ENCODE measurements at regions of chr17 and their contacts with region 1.

Region 1: DNA sequence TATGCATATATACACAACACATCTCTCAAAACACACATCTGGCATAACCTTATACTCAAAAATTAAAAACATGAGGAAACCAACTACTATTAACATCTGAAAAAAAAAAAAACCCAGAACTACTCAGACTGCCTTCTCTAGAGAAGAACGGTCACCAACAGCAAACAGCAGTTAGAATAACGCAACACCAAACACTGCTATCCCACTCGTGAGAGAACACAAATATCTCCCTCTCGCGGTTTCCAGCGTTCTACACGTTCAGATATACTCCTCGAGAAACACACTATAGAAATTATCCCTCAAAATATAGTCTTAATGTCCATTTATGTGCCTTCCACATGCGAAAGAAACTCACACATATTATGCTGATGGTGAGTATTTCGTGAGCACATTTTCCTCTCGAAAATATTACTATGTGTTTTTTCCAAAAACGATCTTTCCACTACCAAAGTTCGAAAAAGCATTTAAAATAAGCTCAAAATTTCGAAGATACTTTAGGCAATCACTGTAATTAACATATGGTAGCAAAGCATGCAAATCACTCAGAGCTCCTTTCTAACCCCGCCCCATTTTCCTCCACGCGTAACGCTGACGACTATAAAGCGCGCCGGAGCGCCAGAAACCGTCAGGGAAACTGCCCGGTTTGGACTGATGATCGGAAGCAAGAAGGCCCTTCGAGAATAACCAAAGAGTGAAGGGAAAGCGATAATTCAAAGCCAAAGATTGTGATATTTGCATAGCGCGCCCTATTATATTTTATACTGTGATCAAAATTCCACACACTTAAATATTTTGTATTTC is 60.1 kb downstream of the TEX14 start:
- DNase-seq: peak; percentile 96
- H3K4me3 Mint-ChIP-seq: no peak overlapping the region
- H3K27ac Mint-ChIP-seq: no peak overlapping the region
- H3K4me1 Mint-ChIP-seq: peaks cover 4% of the 10 kb centered on the region
- H3K27me3 Mint-ChIP-seq: no peaks in the 10 kb centered on the region

Region 2: DNA sequence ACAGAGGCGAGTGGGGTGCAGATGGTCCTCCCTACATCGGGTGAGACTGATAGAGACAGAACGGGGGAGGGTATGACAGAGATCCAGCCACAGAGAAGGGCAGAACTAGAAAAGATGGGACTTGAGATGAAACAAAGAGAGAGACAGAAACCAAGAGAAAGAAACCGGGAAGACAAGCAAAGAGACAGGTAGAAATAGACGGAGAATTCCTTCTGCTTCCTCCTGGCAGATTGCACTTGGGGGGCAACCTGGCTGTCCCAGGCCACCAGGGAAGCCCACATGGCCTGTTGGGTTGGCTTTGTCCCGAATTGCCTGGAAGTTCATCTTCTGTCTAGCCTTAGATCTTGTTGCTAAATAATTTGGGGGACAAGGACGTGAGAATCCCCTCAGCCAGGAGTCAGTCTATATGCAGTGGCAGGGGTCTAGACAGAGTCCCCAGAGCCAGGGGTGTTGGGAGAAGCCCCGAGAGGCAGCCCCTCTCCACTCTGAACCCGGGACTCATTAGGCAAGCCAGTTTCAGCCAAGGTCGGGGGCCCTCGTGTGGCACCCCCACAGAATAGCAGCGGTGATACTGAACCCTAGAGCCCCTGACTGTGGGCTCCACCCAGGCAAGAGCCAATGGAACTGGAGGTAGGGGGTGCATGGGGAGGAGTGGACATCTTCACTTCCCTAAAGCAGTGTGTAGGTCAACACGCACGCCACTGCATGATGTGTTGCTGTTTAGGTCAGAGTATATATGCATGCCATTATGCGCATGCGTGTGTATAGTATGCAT is 302.5 kb before region 1 on chr17:
- intact Hi-C with region 1: loop called (anchors 5 kb)
- DNase-seq: peak; percentile 81
- H3K4me3 Mint-ChIP-seq: peak overlapping the region; percentile 100
- H3K27ac Mint-ChIP-seq: peak overlapping the region; percentile 93
- H3K4me1 Mint-ChIP-seq: peaks cover 45% of the 10 kb centered on the region
- H3K27me3 Mint-ChIP-seq: peaks cover 2% of the 10 kb centered on the region

Region 3: GRCh38 chr17:58658804-58659713 is 27.3 kb after region 1 on chr17:
- intact Hi-C with region 1: loop called (anchors 1 kb)
- DNase-seq: peak; percentile 74
- H3K4me3 Mint-ChIP-seq: peak overlapping the region; percentile 63
- H3K27ac Mint-ChIP-seq: peak overlapping the region; percentile 97
- H3K4me1 Mint-ChIP-seq: peaks cover 25% of the 10 kb centered on the region
- H3K27me3 Mint-ChIP-seq: peaks cover 7% of the 10 kb centered on the region

Region 4: GRCh38 chr17:58703137-58703972 is 71.6 kb after region 1 on chr17:
- intact Hi-C with region 1: loop called (anchors 2 kb)
- DNase-seq: no peak
- H3K4me3 Mint-ChIP-seq: no peak overlapping the region
- H3K27ac Mint-ChIP-seq: peak overlapping the region; percentile 89
- H3K4me1 Mint-ChIP-seq: peaks cover 48% of the 10 kb centered on the region
- H3K27me3 Mint-ChIP-seq: no peaks in the 10 kb centered on the region

Region 5: GRCh38 chr17:58728786-58729185 is 97.1 kb after region 1 on chr17:
- intact Hi-C with region 1: no loop called
- DNase-seq: no peak
- H3K4me3 Mint-ChIP-seq: no peak overlapping the region
- H3K27ac Mint-ChIP-seq: no peak overlapping the region
- H3K4me1 Mint-ChIP-seq: peaks cover 5% of the 10 kb centered on the region
- H3K27me3 Mint-ChIP-seq: no peaks in the 10 kb centered on the region

Region 6: DNA sequence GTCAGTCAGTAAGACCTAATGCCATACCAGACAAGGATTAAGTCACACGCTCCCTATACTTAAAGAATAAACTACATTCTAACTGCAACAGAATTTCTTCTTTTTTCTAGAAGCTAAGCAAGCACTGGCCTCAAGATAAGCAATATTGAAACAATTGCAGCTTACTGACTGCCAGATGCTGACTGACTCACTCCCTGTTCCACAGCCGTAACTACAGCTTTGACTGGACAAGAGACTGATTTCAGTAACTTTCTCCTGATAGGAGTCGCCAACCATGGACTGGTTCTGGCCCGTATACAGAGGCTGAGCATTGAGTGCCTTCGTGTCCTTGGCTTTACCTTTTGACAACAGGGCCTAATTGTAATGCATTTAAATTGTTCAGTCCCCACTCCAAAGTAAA is 407.0 kb after region 1 on chr17:
- intact Hi-C with region 1: no loop called
- DNase-seq: no peak
- H3K4me3 Mint-ChIP-seq: peak overlapping the region; percentile 15
- H3K27ac Mint-ChIP-seq: peak overlapping the region; percentile 29
- H3K4me1 Mint-ChIP-seq: peaks cover 6% of the 10 kb centered on the region
- H3K27me3 Mint-ChIP-seq: no peaks in the 10 kb centered on the region

Region 7: DNA sequence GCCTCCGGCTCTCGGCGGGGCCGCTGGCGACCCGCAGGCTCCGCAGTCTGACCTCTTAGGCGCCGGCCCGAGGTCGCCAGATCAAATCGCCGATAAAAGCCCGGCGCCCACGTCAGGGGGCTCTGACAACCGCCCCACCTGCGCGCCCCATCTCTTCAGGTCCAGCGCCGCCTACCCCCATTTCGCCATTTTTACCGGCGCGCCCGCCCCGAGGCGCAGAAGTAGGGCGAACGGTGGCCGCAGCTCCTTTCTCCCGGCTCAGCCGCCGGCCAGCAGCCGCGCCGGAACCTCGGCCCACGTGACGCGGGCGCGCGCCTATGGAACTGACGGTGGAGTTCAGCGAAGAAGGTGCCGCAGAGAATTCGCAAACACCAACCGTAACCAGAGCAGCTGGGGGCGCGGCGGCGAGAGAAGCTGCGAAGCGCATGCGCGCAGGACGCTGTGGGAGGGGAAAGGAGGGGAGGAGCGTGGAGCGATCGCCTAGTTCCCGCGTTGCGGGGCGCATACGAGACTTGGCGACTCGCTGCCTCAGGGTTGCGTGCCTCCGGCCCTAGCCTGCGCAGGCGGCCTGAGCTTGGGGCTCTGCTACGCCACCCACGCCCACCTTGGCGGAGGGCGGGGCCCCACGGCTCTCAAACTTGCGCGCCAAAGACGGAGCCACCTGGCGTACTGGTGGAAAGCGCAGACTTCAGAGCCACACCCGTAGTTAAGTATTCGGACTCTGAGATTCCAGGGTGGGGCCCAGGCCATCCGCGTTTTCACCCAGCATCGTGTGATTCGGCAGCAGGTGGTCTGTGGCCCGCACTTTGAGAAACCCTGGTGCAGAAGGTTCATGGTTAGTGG is 475.0 kb after region 1 on chr17 and contains the start of gene TRIM37:
- intact Hi-C with region 1: loop called (anchors 5 kb)
- DNase-seq: peak; percentile 100
- H3K4me3 Mint-ChIP-seq: peak within 1 kb of the TSS; percentile 97
- H3K27ac Mint-ChIP-seq: peak within 1 kb of the TSS; percentile 90
- H3K4me1 Mint-ChIP-seq: peaks cover 66% of the 10 kb centered on the region
- H3K27me3 Mint-ChIP-seq: peaks cover 1% of the 10 kb centered on the region
- total RNA-seq, gene TRIM37: 27.5 and 27.7 TPM in 2 replicates